ENCODE measurements at regions of chr2 and their contacts with region 1.

Region 1: GRCh38 chr2:191189112-191189635 is 38.4 kb upstream of the STAT4 start:
- DNase-seq: no peak
- H3K4me3 Mint-ChIP-seq: no peak overlapping the region
- H3K27ac Mint-ChIP-seq: peak overlapping the region; percentile 68
- H3K4me1 Mint-ChIP-seq: peaks cover 73% of the 10 kb centered on the region
- H3K27me3 Mint-ChIP-seq: no peaks in the 10 kb centered on the region

Region 2: GRCh38 chr2:191171708-191172355 is 17.3 kb before region 1 on chr2:
- CTCF ChIA-PET with region 1: interaction called, 10 read pairs
- intact Hi-C with region 1: loop called (anchors 1 kb)
- DNase-seq: no peak
- H3K4me3 Mint-ChIP-seq: no peak overlapping the region
- H3K27ac Mint-ChIP-seq: peak overlapping the region; percentile 38
- H3K4me1 Mint-ChIP-seq: peaks cover 75% of the 10 kb centered on the region
- H3K27me3 Mint-ChIP-seq: no peaks in the 10 kb centered on the region

Region 3: GRCh38 chr2:191218292-191218898 is 29.2 kb after region 1 on chr2:
- CTCF ChIA-PET with region 1: interaction called, 8 read pairs
- intact Hi-C with region 1: loop called (anchors 1 kb)
- DNase-seq: peak; percentile 67
- H3K4me3 Mint-ChIP-seq: no peak overlapping the region
- H3K27ac Mint-ChIP-seq: no peak overlapping the region
- H3K4me1 Mint-ChIP-seq: peaks cover 25% of the 10 kb centered on the region
- H3K27me3 Mint-ChIP-seq: no peaks in the 10 kb centered on the region

Region 4: GRCh38 chr2:191573216-191573615 is 384.0 kb after region 1 on chr2:
- CTCF ChIA-PET with region 1: no interaction called
- intact Hi-C with region 1: loop called (anchors 1 kb)
- DNase-seq: no peak
- H3K4me3 Mint-ChIP-seq: no peak overlapping the region
- H3K27ac Mint-ChIP-seq: peak overlapping the region; percentile 89
- H3K4me1 Mint-ChIP-seq: peaks cover 54% of the 10 kb centered on the region
- H3K27me3 Mint-ChIP-seq: no peaks in the 10 kb centered on the region

Region 5: DNA sequence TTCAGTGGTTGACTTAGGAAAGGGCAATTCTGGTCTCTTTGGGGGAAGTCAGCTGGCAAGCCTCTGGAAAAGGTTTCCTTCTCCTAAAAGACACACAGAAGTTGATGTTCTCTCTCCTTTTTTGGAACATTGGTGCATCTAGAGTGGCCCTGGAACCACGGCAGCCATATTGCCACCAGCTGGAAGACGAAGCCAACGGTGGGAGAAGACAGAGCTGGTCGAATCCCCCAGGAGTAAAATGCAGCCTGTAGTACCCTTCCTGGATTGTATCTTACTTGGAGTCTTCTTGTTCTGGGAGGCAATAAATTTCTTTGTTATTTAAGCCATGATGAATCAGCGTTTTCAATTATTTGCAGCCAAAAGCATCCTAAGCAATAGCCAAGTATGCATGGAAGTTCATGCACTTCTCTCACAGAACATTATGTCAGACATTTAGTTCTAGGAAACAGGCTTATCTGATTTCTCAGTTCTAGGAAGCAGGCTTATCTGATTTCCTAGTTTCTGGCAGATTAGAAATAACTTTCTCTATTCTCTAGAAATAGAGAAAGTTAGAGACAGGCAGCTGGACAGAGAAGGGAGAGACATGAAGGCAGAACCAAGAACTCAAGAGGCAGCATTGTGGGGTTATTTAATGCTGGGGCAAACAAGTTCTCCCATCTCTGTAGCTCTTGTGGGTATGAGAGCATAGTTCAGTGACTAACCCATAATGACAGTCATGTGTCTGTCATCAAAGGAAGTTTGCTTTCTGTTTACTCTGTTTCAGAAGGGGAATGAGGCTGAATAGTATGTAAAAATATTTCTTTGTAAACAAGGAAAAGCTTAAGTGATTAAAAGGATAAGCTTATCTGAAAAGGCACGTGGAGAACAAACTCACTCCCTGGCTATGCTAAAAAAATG is 448.3 kb after region 1 on chr2:
- CTCF ChIA-PET with region 1: no interaction called
- intact Hi-C with region 1: loop called (anchors 5 kb)
- DNase-seq: no peak
- H3K4me3 Mint-ChIP-seq: no peak overlapping the region
- H3K27ac Mint-ChIP-seq: peak overlapping the region; percentile 77
- H3K4me1 Mint-ChIP-seq: peaks cover 58% of the 10 kb centered on the region
- H3K27me3 Mint-ChIP-seq: no peaks in the 10 kb centered on the region

Region 6: GRCh38 chr2:192208848-192209247 is 1019.7 kb after region 1 on chr2:
- CTCF ChIA-PET with region 1: no interaction called
- intact Hi-C with region 1: no loop called
- DNase-seq: no peak
- H3K4me3 Mint-ChIP-seq: no peak overlapping the region
- H3K27ac Mint-ChIP-seq: no peak overlapping the region
- H3K4me1 Mint-ChIP-seq: no peaks in the 10 kb centered on the region
- H3K27me3 Mint-ChIP-seq: peaks cover 16% of the 10 kb centered on the region

Measured in activated naive CD4-positive, alpha-beta T cell treated with anti-CD3 and anti-CD28 coated beads for 36 hours (primary cell).